IMR-90 (cell line): ENCODE measurements at regions of chr6 and their contacts with region 1.

Region 1: DNA sequence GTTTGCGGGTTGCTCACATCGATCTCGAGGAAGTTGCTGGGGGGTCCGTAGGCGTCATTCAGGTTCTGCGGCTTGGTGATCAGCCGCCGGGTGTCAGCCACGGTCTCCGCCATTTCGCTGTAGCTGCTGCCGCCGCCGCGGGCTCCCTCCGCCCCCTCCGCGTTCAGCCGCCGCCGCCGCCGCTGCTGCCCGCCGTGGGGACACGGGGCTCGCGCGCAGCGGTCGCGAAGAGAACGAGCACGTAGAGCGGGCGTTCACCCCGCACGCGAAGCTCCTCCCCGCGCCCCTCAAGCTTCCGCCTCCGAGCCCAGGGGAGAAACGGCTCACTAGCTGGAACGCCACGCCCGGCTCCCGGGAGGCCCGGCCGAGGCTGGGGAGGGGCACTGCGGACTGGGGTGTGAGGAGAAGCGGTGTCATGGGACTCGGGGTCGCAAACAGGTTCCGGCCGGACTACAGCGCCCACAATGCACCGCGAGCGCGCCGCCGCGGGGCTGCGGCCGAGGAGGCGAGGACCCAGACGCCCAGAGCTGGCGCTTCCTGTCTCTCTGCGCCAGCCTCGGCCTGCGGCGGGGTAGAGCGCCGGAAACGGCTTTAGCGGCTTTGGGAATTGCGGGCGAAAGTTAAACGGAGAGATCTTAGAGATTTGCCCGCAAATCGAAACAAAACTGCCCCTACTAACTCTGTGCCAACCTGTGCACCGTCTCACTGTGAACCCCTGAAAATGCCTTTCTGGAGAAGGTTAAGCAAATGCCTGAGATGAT is at the start of gene SNX3:
- DNase-seq: peak; percentile 96
- ATAC-seq: peak; percentile 95
- H3K4me3 ChIP-seq: peak within 1 kb of the TSS; percentile 72
- H3K27ac ChIP-seq: peak within 1 kb of the TSS; percentile 97
- H3K4me1 ChIP-seq: no peaks in the 10 kb centered on the region
- H3K27me3 ChIP-seq: no peaks in the 10 kb centered on the region
- CTCF ChIP-seq: peak; percentile 23
- POLR2A ChIP-seq: peak; percentile 58; the same call in 1 of the 2 replicates
- RAD21 ChIP-seq: no peak
- total RNA-seq, gene SNX3: 105 and 171 TPM in 2 replicates

Region 2: DNA sequence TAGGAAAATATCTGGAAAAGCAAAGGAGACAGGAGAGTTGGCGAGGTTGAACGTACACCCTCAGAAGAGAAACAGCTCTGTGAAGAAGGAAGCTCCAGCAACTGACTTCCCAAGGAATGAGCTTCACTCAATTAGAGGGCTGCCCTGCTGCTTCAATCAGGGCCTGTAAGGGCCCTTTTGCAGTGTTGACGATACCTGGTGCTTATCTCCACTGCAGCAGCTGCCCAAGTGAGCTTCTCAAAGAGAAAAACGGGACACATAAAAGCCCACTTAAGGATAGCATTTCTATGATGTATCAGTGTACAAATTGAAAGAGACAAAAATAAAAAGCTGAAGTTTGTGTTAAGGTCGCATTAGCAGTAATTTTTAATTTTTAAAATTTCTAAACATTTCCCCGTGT is 319.4 kb before region 1 on chr6:
- CTCF ChIA-PET with region 1: no interaction called
- POLR2A ChIA-PET with region 1: no interaction called
- dilution Hi-C with region 1: no loop called
- in situ Hi-C with region 1: no loop called
- intact Hi-C with region 1: no loop called
- DNase-seq: no peak
- ATAC-seq: no peak
- H3K4me3 ChIP-seq: no peak overlapping the region
- H3K27ac ChIP-seq: no peak overlapping the region
- H3K4me1 ChIP-seq: 0 out of 2 replicates have a peak, but pooled peaks cover 2% of the 10 kb centered on the region
- H3K27me3 ChIP-seq: no peaks in the 10 kb centered on the region
- CTCF ChIP-seq: no peak
- POLR2A ChIP-seq: no peak
- RAD21 ChIP-seq: no peak

Region 3: DNA sequence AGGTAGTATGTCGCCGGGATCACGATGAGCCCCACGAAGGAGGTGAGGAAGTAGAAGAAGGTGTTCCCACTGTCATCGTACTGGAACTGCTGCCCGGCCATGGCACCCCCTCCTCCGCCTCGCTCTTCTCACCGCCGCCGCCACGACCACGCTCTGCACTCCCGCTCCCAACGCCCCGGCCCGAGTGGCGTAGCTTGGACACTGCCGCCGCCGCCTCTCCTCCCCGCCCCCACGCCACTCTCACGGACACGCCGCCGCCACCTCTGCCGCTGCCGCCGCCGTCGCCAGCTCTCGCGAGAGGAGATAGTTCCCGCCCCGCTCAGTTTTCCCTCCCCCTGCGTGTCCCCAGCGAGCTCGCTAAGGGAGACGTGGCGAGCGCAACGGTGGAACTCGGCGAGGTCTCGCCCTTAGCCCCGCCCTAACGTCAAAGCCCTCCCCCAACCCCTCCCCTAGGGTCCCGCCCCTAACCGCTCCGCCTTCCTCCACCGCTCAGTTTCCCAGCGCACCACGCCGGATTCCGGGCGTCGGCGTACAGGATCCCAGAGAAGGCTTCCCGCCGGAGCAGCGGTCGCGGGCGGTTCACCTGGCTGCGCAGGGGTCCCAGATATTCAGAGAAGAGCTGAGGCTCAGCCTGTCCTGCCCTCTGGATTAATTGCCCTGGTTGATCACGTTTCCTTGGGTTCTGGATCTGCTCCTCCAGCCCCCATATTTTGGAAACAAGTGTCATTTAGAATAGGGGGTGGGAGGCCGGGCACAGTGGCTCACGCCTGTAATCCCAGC is 302.9 kb before region 1 on chr6 and contains the start of gene SEC63:
- CTCF ChIA-PET with region 1: no interaction called
- POLR2A ChIA-PET with region 1: no interaction called
- dilution Hi-C with region 1: no loop called
- in situ Hi-C with region 1: no loop called
- intact Hi-C with region 1: no loop called
- DNase-seq: peak; percentile 96
- ATAC-seq: peak; percentile 97
- H3K4me3 ChIP-seq: peak within 1 kb of the TSS; percentile 90
- H3K27ac ChIP-seq: peak within 1 kb of the TSS; percentile 95
- H3K4me1 ChIP-seq: peaks cover 2% of the 10 kb centered on the region; the same call in 1 of the 2 replicates
- H3K27me3 ChIP-seq: no peaks in the 10 kb centered on the region
- CTCF ChIP-seq: no peak
- POLR2A ChIP-seq: peak; percentile 91
- RAD21 ChIP-seq: no peak
- total RNA-seq, gene SEC63: 8.6 and 18.3 TPM in 2 replicates

Region 4: GRCh38 chr6:108074359-108075144 is 186.4 kb before region 1 on chr6 and contains the start of gene OSTM1:
- CTCF ChIA-PET with region 1: no interaction called
- POLR2A ChIA-PET with region 1: no interaction called
- dilution Hi-C with region 1: no loop called
- in situ Hi-C with region 1: no loop called
- intact Hi-C with region 1: loop called (anchors 2 kb)
- DNase-seq: peak; percentile 82
- ATAC-seq: peak; percentile 99
- H3K4me3 ChIP-seq: peak within 1 kb of the TSS; percentile 93
- H3K27ac ChIP-seq: peak within 1 kb of the TSS; percentile 58
- H3K4me1 ChIP-seq: peaks cover 2% of the 10 kb centered on the region; the same call in 1 of the 2 replicates
- H3K27me3 ChIP-seq: no peaks in the 10 kb centered on the region
- CTCF ChIP-seq: no peak
- POLR2A ChIP-seq: peak; percentile 59; the same call in 1 of the 2 replicates
- RAD21 ChIP-seq: no peak
- total RNA-seq, gene OSTM1: 17.5 and 24.7 TPM in 2 replicates

Region 5: GRCh38 chr6:108113557-108114519 is 147.2 kb before region 1 on chr6:
- CTCF ChIA-PET with region 1: no interaction called
- POLR2A ChIA-PET with region 1: no interaction called
- dilution Hi-C with region 1: no loop called
- in situ Hi-C with region 1: no loop called
- intact Hi-C with region 1: loop called (anchors 5 kb)
- DNase-seq: peak; percentile 48
- ATAC-seq: peak; percentile 81
- H3K4me3 ChIP-seq: no peak overlapping the region
- H3K27ac ChIP-seq: no peak overlapping the region
- H3K4me1 ChIP-seq: no peaks in the 10 kb centered on the region; the same call in 1 of the 2 replicates
- H3K27me3 ChIP-seq: peaks cover 80% of the 10 kb centered on the region
- CTCF ChIP-seq: peak; percentile 69
- POLR2A ChIP-seq: no peak
- RAD21 ChIP-seq: peak; percentile 73

Region 6: DNA sequence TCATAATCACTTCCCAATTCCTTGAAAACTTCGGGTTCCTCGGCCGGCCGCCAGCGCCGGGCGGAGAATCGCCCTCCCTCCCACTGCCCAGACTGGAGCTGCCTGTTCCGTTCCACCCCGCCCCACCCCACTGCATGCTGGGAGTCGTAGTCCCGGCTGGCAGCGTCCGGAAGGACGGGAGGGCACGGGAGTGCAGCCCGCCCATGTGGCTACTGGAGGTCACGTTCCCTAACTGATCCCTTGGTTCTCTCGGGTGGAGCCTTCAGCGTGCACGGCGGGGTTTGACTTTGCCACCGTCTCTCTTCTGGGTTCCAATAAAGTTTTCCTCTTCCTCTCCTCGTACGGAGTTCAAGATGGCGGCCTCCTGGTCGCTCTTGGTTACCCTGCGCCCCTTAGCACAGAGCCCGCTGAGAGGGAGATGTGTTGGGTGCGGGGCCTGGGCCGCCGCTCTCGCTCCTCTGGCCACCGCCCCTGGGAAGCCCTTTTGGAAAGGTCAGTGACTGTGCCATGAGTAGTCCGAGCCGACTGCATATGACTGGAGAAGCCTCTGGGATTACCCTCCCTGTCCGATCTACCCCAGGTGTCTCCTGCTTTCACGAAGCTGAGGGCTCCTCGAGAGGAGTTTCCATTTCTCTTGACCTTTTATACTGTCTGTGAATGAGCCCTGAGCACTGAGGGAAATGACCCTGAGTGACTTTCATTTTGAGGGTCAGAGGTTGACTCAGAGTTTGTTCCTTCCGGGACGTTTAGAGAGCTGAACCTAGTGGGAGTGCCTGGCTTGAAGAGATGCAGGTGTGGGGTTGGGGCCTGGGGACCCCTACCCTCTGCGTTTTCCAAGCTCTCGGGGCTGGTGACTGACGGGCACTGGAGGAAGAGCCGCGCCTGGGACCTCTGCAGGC is 34.0 kb after region 1 on chr6 and contains the start of gene AFG1L:
- CTCF ChIA-PET with region 1: no interaction called
- POLR2A ChIA-PET with region 1: no interaction called
- dilution Hi-C with region 1: no loop called
- in situ Hi-C with region 1: no loop called
- intact Hi-C with region 1: loop called (anchors 1 kb)
- DNase-seq: peak; percentile 80
- ATAC-seq: peak; percentile 99
- H3K4me3 ChIP-seq: peak within 1 kb of the TSS; percentile 75
- H3K27ac ChIP-seq: peak within 1 kb of the TSS; percentile 95
- H3K4me1 ChIP-seq: no peaks in the 10 kb centered on the region
- H3K27me3 ChIP-seq: no peaks in the 10 kb centered on the region
- CTCF ChIP-seq: no peak
- POLR2A ChIP-seq: peak; percentile 39; the same call in 1 of the 2 replicates
- RAD21 ChIP-seq: no peak
- total RNA-seq, gene AFG1L: 2.0 and 2.8 TPM in 2 replicates

Region 7: GRCh38 chr6:108492131-108492766 is 231.3 kb after region 1 on chr6:
- CTCF ChIA-PET with region 1: interaction called, 3 read pairs
- POLR2A ChIA-PET with region 1: interaction called, 4 read pairs
- dilution Hi-C with region 1: no loop called
- in situ Hi-C with region 1: no loop called
- intact Hi-C with region 1: loop called (anchors 5 kb)
- DNase-seq: peak; percentile 54
- ATAC-seq: peak; percentile 71
- H3K4me3 ChIP-seq: no peak overlapping the region
- H3K27ac ChIP-seq: no peak overlapping the region
- H3K4me1 ChIP-seq: no peaks in the 10 kb centered on the region
- H3K27me3 ChIP-seq: no peaks in the 10 kb centered on the region
- CTCF ChIP-seq: peak; percentile 68
- POLR2A ChIP-seq: no peak
- RAD21 ChIP-seq: peak; percentile 78

Region 8: GRCh38 chr6:108526739-108527174 is 265.8 kb after region 1 on chr6:
- CTCF ChIA-PET with region 1: no interaction called
- POLR2A ChIA-PET with region 1: no interaction called
- dilution Hi-C with region 1: no loop called
- in situ Hi-C with region 1: no loop called
- intact Hi-C with region 1: loop called (anchors 1 kb)
- DNase-seq: peak; percentile 62
- ATAC-seq: peak; percentile 63
- H3K4me3 ChIP-seq: no peak overlapping the region
- H3K27ac ChIP-seq: no peak overlapping the region
- H3K4me1 ChIP-seq: peaks cover 2% of the 10 kb centered on the region; the same call in 1 of the 2 replicates
- H3K27me3 ChIP-seq: peaks cover 11% of the 10 kb centered on the region
- CTCF ChIP-seq: peak; percentile 88
- POLR2A ChIP-seq: peak; percentile 33; the same call in 1 of the 2 replicates
- RAD21 ChIP-seq: peak; percentile 91

Region 9: DNA sequence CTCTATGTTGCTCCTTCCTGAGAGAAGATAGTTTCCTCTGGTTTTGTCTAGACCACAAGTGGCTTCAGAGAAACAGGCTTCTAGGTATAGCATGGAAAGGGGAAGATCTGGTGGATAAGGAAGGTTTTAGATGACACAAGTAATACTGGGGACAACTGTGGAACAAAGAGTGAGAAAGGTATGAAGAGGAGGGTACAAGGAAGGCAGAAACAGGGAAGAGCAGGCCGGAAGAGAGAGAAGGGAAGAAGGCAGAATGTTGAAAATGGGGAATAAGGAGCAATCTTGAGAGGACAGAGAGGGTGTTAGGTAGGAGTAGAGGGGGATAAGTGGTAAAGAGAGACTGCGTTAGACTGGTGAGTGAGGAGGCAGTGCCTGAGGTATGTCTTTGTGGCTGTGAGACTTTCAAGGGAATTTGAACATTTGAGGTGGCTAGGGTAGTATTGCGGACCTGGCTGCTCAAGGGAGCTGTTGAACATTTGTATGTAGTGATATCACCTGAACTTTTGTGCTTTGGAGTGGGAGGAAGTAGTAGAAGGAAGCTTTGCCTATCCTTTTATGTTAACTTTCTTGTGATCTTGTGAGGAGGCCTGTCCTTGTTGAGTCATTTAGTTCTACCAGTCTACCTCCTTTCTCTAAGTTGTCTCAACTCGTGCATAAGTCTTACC is 369.2 kb after region 1 on chr6:
- CTCF ChIA-PET with region 1: no interaction called
- POLR2A ChIA-PET with region 1: no interaction called
- dilution Hi-C with region 1: no loop called
- in situ Hi-C with region 1: no loop called
- intact Hi-C with region 1: no loop called
- DNase-seq: peak; percentile 35
- ATAC-seq: no peak
- H3K4me3 ChIP-seq: no peak overlapping the region
- H3K27ac ChIP-seq: no peak overlapping the region
- H3K4me1 ChIP-seq: peaks cover 18% of the 10 kb centered on the region
- H3K27me3 ChIP-seq: no peaks in the 10 kb centered on the region
- CTCF ChIP-seq: no peak
- POLR2A ChIP-seq: no peak
- RAD21 ChIP-seq: no peak